ENCODE measurements at regions of chr1 and their contacts with region 1.

Region 1: GRCh38 chr1:228405987-228406265 is 709 bp downstream of the TRIM11 start:
- DNase-seq: no peak
- H3K4me3 Mint-ChIP-seq: peak overlapping the region; percentile 97
- H3K27ac Mint-ChIP-seq: peak overlapping the region; percentile 92
- H3K4me1 Mint-ChIP-seq: peaks cover 41% of the 10 kb centered on the region
- H3K27me3 Mint-ChIP-seq: no peaks in the 10 kb centered on the region

Region 2: GRCh38 chr1:228416217-228416933 is 10.4 kb after region 1 on chr1 and contains the start of gene TRIM17:
- intact Hi-C with region 1: loop called (anchors 1 kb)
- DNase-seq: no peak
- H3K4me3 Mint-ChIP-seq: peak within 1 kb of the TSS; percentile 77
- H3K27ac Mint-ChIP-seq: peak within 1 kb of the TSS; percentile 56
- H3K4me1 Mint-ChIP-seq: peaks cover 16% of the 10 kb centered on the region
- H3K27me3 Mint-ChIP-seq: peaks cover 21% of the 10 kb centered on the region
- total RNA-seq, gene TRIM17: 2.3 and 2.7 TPM in 2 replicates